Activated CD8-positive, alpha-beta memory T cell treated with anti-CD3 and anti-CD28 coated beads, Interleukin-2, amount 10 ng/mL, durations not matched to agents 7 days and 5 days (primary cell): ENCODE measurements at regions of chr11 and their contacts with region 1.

Region 1: DNA sequence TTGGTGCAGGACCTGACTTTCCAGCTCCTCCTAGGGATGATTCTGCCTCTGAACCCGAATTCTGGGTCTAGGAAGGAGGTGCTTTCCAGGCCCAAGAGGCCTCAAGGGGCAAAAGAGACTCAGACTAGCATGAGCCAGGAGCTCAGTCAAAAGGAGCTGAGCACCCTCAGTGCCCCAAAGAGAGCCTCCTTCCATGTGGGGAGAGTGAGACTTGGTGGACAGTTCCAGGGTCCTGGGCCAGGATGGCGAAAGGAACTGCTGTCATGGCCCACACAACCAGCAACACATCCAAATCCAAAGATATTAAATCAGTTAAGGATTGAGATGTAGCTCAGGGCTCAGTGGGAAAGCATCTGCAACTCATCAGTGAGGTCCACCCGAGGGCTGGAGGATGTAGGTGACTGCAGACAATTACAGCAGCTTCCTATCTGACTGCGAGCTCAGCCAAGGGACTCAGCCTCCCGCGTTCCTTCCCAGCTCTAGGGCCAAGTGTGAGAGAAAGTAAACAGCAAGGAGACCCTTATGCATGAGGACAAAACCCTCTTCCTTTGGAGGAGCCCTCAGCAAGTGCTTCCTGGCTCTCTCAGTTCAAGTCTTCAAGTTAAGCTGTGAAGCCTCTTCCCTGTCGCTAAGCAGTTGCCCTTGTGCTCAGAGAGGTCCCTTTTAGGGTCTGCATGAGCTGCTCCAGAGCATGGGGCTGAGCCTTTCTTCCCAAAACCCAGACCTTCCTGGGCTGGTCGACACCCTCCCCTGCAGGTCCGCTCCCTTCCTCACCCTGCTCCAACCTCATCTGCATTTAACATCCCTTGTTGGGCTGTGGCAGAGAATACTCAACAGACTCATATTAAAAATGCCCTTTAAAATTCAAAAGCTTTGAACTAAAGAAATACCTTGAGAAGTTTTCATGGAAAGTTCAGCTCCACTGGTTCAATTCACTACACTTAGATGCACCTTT is 35.8 kb downstream of the C11orf58 start:
- DNase-seq: peak; percentile 28
- ATAC-seq: no peak
- H3K4me3 Mint-ChIP-seq: no peak overlapping the region
- H3K27ac Mint-ChIP-seq: no peak overlapping the region
- H3K4me1 Mint-ChIP-seq: no peaks in the 10 kb centered on the region
- H3K27me3 Mint-ChIP-seq: peaks cover 5% of the 10 kb centered on the region

Region 2: GRCh38 chr11:16785520-16786128 is 11.4 kb after region 1 on chr11:
- CTCF ChIA-PET with region 1: interaction called, 29 read pairs
- DNase-seq: peak; percentile 69
- ATAC-seq: peak; percentile 75
- H3K4me3 Mint-ChIP-seq: no peak overlapping the region
- H3K27ac Mint-ChIP-seq: no peak overlapping the region
- H3K4me1 Mint-ChIP-seq: no peaks in the 10 kb centered on the region
- H3K27me3 Mint-ChIP-seq: no peaks in the 10 kb centered on the region